ENCODE measurements at regions of chr2 and their contacts with region 1.

Region 1: DNA sequence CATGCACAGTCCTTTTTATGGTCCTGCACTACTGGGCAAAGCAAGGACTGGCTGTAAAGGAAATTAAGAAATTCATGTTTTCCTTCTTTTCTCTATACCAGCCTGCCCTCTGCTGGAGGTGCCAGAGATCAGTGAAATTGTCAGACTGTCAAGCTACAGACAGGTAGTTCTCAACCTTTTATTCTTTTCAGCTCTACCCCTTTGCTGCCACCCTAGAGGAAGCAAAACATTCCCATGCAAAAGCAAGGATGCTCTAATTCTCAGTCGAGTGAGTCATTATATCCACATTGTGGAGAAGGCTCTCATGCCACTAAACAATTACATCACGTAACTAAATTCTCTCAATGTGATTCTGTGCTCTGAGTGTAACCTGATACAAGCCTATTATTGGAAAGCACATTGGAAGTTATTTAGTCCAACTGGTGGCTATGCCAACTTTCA is 25.0 kb upstream of the RAPGEF4 start:
- DNase-seq: no peak
- ATAC-seq: no peak
- H3K4me3 Mint-ChIP-seq: no peak overlapping the region
- H3K27ac Mint-ChIP-seq: no peak overlapping the region
- H3K4me1 Mint-ChIP-seq: no peaks in the 10 kb centered on the region
- H3K27me3 Mint-ChIP-seq: peaks cover 2% of the 10 kb centered on the region
- CTCF ChIP-seq: no peak

Region 2: DNA sequence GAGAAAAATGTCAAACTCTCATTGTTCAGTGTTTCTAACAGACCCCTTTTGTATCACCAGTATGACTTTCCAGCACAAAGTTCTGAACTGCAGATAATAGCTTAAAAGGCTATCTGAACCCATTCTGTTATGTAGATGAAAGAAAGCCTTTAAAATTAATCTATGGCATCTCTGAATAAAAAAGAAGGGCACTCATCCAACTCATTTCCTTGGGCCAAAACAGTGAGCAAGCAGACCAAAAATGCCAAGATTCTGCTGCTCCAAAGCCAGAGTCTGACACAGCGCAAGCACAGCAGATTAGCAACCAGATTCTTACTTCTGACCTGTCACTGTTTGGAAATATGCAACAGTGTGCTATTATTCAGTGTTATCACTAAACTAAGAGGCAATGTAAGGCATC is 305.8 kb before region 1 on chr2:
- CTCF ChIA-PET with region 1: no interaction called
- POLR2A ChIA-PET with region 1: no interaction called
- intact Hi-C with region 1: no loop called
- DNase-seq: no peak
- ATAC-seq: no peak
- H3K4me3 Mint-ChIP-seq: no peak overlapping the region
- H3K27ac Mint-ChIP-seq: no peak overlapping the region
- H3K4me1 Mint-ChIP-seq: no peaks in the 10 kb centered on the region
- H3K27me3 Mint-ChIP-seq: peaks cover 13% of the 10 kb centered on the region
- CTCF ChIP-seq: no peak

Region 3: DNA sequence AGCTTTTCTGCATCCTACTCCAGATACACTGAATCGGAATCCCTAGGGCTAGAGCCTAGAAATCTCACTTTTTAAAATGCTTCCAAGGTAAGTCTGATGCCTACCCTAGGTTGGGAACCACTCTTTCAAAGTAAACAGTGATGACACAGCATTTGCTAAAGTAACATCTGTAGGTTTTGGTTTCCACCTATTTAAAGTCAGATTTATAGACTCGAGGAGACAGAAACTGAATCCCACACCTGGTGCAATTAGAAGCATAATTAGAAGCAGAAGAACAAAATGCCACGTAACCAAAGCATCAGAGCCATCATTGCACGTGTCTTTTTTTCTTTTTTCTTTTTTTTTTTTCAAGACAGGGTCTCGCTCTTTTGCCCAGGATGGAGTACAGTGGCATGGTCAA is 113.8 kb before region 1 on chr2:
- CTCF ChIA-PET with region 1: interaction called, 4 read pairs
- POLR2A ChIA-PET with region 1: no interaction called
- intact Hi-C with region 1: loop called (anchors 10 kb)
- DNase-seq: no peak
- ATAC-seq: no peak
- H3K4me3 Mint-ChIP-seq: no peak overlapping the region
- H3K27ac Mint-ChIP-seq: no peak overlapping the region
- H3K4me1 Mint-ChIP-seq: no peaks in the 10 kb centered on the region
- H3K27me3 Mint-ChIP-seq: no peaks in the 10 kb centered on the region
- CTCF ChIP-seq: no peak

Region 4: GRCh38 chr2:172698041-172698863 is 12.4 kb before region 1 on chr2:
- CTCF ChIA-PET with region 1: no interaction called
- POLR2A ChIA-PET with region 1: no interaction called
- intact Hi-C with region 1: no loop called
- DNase-seq: no peak
- ATAC-seq: no peak
- H3K4me3 Mint-ChIP-seq: no peak overlapping the region
- H3K27ac Mint-ChIP-seq: no peak overlapping the region
- H3K4me1 Mint-ChIP-seq: no peaks in the 10 kb centered on the region
- H3K27me3 Mint-ChIP-seq: peaks cover 4% of the 10 kb centered on the region
- CTCF ChIP-seq: no peak

Measured in activated B cell treated with CpG ODN at 0.5 μM for 24 hours (primary cell).